Activated naive CD4-positive, alpha-beta T cell treated with anti-CD3 and anti-CD28 coated beads for 36 hours (primary cell): ENCODE measurements at regions of chr7 and their contacts with region 1.

Region 1: GRCh38 chr7:100177045-100178001 is at the starts of genes GPC2 and STAG3:
- DNase-seq: peak; percentile 99
- H3K4me3 Mint-ChIP-seq: peak within 1 kb of the TSS; percentile 80
- H3K27ac Mint-ChIP-seq: peak within 1 kb of the TSS; percentile 30
- H3K4me1 Mint-ChIP-seq: peaks cover 43% of the 10 kb centered on the region
- H3K27me3 Mint-ChIP-seq: no peaks in the 10 kb centered on the region
- total RNA-seq, gene GPC2: 7.6 to 9.5 TPM
- total RNA-seq, gene STAG3: 38.4 to 41.0 TPM

Region 2: DNA sequence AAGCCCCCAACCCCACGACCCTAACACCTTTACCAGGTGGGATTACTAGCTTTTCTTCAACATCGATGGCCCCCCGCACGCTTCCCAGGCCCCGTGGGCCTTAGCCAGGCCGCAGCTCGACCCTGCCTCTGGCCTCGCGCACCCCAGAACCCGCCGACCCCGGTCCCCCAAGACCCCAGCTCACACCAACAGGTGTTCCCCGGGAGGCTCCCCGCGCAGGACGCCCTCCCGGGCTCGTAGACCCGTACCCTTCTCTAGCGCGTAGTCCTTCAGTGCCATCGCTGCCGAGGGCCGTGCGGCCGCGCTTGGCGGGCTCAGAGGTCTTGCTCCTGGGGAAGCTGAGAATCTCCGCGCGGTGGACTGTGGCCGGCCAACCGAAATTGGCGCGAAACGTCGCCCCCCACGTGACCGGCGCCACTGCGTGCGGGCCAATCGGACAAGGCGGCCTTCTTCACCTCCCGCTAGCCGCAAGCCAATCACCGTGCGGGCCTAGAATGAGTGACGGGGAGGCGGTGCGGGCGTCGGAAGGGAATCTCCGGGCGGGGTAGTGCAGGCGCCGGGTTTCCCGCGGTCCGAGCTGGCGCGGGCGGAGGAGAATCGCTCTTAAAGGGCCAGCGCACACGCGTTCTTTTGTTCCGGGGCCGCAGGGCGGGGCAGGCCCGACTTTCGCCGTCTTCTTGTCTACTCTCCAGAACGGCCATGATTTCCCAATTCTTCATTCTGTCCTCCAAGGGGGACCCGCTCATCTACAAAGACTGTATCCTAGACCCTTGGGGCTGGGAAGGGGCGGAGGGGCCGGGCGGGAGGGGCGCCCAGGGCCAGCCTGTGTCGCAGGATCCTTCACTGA is 76.1 kb before region 1 on chr7 and contains the starts of genes AP4M1 and MCM7:
- CTCF ChIA-PET with region 1: no interaction called
- intact Hi-C with region 1: loop called (anchors 2 kb)
- DNase-seq: peak; percentile 98
- H3K4me3 Mint-ChIP-seq: peak within 1 kb of the TSS; percentile 91
- H3K27ac Mint-ChIP-seq: peak within 1 kb of the TSS; percentile 96
- H3K4me1 Mint-ChIP-seq: peaks cover 40% of the 10 kb centered on the region
- H3K27me3 Mint-ChIP-seq: no peaks in the 10 kb centered on the region
- total RNA-seq, gene AP4M1: 12.6 to 12.7 TPM
- total RNA-seq, gene MCM7: 390 to 395 TPM

Region 3: GRCh38 chr7:100119062-100119700 is 58.1 kb before region 1 on chr7 and contains the starts of genes CNPY4 and TAF6:
- CTCF ChIA-PET with region 1: no interaction called
- intact Hi-C with region 1: no loop called
- DNase-seq: peak; percentile 96
- H3K4me3 Mint-ChIP-seq: peak within 1 kb of the TSS; percentile 93
- H3K27ac Mint-ChIP-seq: peak within 1 kb of the TSS; percentile 95
- H3K4me1 Mint-ChIP-seq: peaks cover 17% of the 10 kb centered on the region
- H3K27me3 Mint-ChIP-seq: no peaks in the 10 kb centered on the region
- total RNA-seq, gene CNPY4: 7.2 to 8.7 TPM
- total RNA-seq, gene TAF6: 48.9 to 53.5 TPM

Region 4: DNA sequence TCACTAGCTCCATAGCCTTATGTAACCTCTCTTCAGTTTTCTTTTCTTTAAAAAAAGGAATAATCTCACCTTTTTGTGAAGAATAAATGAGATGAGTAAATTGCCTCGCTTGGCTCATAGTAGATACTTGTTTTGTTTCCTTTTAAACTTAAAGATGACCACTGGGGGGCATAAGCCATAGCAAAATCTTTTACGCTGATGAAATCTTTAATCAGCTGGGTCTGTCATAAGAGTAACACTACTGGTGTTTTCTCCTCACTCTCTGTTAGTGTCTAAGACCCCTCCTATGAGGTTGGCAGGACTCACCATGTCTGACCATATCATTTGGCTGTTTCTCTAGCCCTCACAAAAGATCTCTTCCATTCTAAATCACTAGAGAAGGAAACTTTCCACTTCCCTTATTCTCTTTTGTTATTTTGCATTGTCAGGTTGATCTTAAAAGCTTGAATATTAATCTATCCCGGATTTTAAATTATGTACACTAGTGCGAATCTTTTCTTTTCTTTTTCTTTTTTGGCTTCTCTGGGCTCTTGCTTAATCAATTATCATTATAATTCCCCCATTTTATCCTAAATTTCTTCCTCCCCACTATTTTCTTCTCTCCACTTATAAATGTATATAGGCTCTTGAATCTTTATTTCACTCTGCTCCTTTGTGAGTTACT is 12.9 kb after region 1 on chr7:
- CTCF ChIA-PET with region 1: interaction called, 30 read pairs
- intact Hi-C with region 1: no loop called
- DNase-seq: no peak
- H3K4me3 Mint-ChIP-seq: no peak overlapping the region
- H3K27ac Mint-ChIP-seq: peak overlapping the region; percentile 80
- H3K4me1 Mint-ChIP-seq: peaks cover 45% of the 10 kb centered on the region
- H3K27me3 Mint-ChIP-seq: no peaks in the 10 kb centered on the region

Region 5: DNA sequence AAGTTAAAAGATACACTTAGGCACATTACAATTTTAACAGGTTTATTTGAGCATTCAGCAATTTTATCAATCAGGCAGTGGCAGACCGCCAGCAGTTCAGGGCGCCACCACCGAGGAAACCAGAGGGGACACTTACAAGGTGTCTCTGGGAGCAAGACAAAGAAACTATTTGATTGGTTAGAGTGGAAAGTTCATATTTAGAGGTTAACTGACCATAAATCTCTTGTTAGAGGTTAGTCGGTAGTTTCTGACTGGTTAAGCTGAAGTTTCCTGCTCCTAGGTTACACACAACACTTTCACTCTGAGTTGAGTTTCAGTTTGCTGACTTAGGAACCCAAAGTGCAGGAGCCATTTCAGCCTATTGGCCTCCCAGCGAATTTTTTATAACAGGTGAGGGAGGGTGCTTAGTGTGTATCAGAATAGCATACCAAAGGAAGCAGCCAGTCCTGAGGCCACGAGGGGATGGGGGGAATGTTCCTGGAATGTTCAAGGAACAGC is 31.6 kb after region 1 on chr7:
- CTCF ChIA-PET with region 1: interaction called, 4 read pairs
- intact Hi-C with region 1: loop called (anchors 5 kb)
- DNase-seq: peak; percentile 78
- H3K4me3 Mint-ChIP-seq: peak overlapping the region; percentile 68
- H3K27ac Mint-ChIP-seq: peak overlapping the region; percentile 92
- H3K4me1 Mint-ChIP-seq: peaks cover 52% of the 10 kb centered on the region
- H3K27me3 Mint-ChIP-seq: no peaks in the 10 kb centered on the region

Region 6: DNA sequence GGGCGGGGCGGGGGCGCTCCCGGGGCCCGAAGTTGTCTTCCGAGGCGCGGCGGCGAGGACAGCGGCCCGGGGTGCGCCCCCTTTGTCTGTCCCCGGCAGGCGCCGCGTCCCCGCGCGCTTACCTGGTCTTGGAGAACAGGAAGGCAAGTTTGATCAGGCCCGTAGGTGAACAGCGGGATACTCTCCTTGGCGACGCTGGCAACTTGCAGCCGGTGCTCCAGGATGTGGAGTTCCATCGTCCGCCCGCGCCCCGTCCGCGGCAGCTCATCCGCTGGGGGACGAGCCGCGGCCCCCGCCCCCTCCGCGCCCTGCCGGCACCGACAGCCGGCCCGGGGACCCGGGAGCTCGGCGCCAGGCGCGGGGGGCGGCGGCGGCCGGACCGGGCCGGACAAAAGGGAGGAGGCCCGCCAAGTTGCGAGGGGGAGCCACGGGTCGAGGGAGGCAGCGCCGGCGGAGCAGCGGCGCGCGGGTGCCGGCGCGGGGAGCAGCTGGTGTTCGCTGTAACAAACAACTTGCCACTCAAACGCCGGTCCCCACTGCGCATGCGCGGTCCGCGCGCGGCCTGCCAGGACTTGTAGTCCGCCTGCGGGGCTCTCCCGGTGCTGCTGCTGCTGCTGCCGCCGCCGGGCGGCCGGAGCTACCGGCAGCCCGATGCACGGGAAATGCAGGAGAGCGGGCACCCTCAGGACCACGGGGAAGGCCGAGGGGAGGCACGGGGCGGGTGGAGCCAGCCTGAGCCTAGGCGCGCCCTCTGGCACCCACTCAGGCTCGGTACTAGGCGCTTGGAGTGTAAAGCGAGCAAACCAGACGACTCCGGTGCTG is 94.6 kb after region 1 on chr7:
- CTCF ChIA-PET with region 1: no interaction called
- intact Hi-C with region 1: loop called (anchors 5 kb)
- DNase-seq: peak; percentile 98
- H3K4me3 Mint-ChIP-seq: peak overlapping the region; percentile 70
- H3K27ac Mint-ChIP-seq: no peak overlapping the region
- H3K4me1 Mint-ChIP-seq: peaks cover 11% of the 10 kb centered on the region
- H3K27me3 Mint-ChIP-seq: no peaks in the 10 kb centered on the region